Testis (tissue), 5 donors: ENCODE measurements at regions of chr9 and their contacts with region 1.

Region 1: DNA sequence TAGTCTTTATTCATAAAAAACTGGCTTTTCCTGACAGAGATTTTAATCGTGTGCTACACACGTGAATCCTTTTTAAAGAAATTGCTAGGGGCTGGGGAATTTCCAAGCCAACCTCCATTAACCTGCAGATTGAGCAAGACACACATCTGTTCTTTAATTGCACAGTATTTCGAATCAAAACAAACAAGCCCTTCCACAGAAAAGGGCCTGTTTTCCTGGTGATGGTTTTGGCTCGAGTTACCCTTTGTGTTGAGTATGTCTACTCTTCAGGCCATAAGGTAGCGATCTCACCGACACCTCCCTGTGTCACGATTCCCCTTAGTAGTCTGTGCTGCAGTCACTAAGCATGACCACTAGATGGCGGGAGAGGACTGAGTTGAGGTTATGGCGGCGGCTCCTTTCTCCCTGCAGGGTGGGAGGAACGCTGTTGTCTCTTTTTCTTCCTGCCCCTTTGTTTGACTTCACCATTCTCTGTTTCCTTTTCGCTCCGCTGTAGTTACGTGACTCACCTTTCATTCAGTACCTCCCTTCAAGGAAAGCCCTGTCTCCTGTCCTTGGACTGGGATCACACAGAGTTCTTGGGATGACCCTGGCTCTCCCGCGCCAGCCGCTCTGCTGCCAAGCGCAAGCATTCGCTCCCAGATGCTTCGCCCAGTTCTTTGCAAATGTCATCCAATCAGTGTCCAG is 137.1 kb upstream of the SLC24A2 start:
- DNase-seq: peak; percentile 85
- H3K4me3 ChIP-seq: peak overlapping the region; percentile 32 to 43
- H3K27ac ChIP-seq: no peak overlapping the region
- H3K4me1 ChIP-seq: peaks cover 5% of the 10 kb centered on the region
- H3K27me3 ChIP-seq: no peaks in the 10 kb centered on the region
- CTCF ChIP-seq: peak; percentile 79 to 94 (median 94)
- POLR2A ChIP-seq: no peak

Region 2: GRCh38 chr9:20636888-20637440 is 711.0 kb after region 1 on chr9:
- intact Hi-C with region 1: loop called (anchors 10 kb)
- DNase-seq: no peak
- H3K4me3 ChIP-seq: no peak overlapping the region
- H3K27ac ChIP-seq: no peak overlapping the region
- H3K4me1 ChIP-seq: no peaks in the 10 kb centered on the region
- H3K27me3 ChIP-seq: no peaks in the 10 kb centered on the region
- CTCF ChIP-seq: no peak
- POLR2A ChIP-seq: no peak

Region 3: DNA sequence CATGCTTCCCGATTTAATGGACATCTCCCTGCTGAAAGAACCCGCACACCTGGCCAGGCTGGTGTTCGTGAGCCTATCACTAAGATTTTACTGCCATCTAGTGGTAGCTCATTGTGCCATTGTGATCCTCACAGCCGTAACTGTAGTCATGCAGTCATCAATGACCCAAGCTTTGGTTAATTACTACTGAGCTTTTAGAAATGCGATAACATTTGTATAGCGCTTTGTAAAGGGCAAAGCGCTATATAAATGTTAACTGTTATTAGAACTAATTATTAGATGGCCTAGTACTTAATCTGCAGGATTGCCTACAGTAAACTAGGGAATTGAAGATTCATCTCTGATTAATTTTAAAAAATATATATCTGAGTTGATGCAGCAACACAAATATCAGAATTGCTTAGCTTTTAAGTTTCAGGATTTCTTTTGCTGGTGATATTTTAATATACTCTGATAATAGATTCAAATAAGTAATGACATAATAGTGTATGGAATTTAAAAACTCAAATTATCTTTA is 1015.3 kb after region 1 on chr9:
- intact Hi-C with region 1: loop called (anchors 10 kb)
- DNase-seq: peak; percentile 73
- H3K4me3 ChIP-seq: no peak overlapping the region
- H3K27ac ChIP-seq: no peak overlapping the region
- H3K4me1 ChIP-seq: no peaks in the 10 kb centered on the region
- H3K27me3 ChIP-seq: no peaks in the 10 kb centered on the region
- CTCF ChIP-seq: peak; percentile 57 to 68 (median 63)
- POLR2A ChIP-seq: no peak